Naive thymus-derived CD4-positive, alpha-beta T cell (primary cell): ENCODE measurements at regions of chr2 and their contacts with region 1.

Region 1: GRCh38 chr2:226835796-226836547 is at the start of gene RHBDD1:
- DNase-seq: peak; percentile 88 to 96 (median 94)
- ATAC-seq: peak; percentile 94
- H3K4me3 ChIP-seq: peak within 1 kb of the TSS; percentile 82
- H3K4me3 Mint-ChIP-seq: peak within 1 kb of the TSS; percentile 85 to 99 (median 97)
- H3K27ac ChIP-seq: peak within 1 kb of the TSS; percentile 99
- H3K27ac Mint-ChIP-seq: peak within 1 kb of the TSS; percentile 95 to 100 (median 100)
- H3K4me1 ChIP-seq: peaks cover 27 to 45% of the 10 kb centered on the region in 2 donors
- H3K4me1 Mint-ChIP-seq: peaks cover 20 to 67% (median 64%) of the 10 kb centered on the region in 7 donors
- H3K27me3 ChIP-seq: no peaks in the 10 kb centered on the region
- H3K27me3 Mint-ChIP-seq: no peaks in the 10 kb centered on the region
- total RNA-seq, gene RHBDD1: 42.9 to 70.8 (median 62.1) TPM

Region 2: DNA sequence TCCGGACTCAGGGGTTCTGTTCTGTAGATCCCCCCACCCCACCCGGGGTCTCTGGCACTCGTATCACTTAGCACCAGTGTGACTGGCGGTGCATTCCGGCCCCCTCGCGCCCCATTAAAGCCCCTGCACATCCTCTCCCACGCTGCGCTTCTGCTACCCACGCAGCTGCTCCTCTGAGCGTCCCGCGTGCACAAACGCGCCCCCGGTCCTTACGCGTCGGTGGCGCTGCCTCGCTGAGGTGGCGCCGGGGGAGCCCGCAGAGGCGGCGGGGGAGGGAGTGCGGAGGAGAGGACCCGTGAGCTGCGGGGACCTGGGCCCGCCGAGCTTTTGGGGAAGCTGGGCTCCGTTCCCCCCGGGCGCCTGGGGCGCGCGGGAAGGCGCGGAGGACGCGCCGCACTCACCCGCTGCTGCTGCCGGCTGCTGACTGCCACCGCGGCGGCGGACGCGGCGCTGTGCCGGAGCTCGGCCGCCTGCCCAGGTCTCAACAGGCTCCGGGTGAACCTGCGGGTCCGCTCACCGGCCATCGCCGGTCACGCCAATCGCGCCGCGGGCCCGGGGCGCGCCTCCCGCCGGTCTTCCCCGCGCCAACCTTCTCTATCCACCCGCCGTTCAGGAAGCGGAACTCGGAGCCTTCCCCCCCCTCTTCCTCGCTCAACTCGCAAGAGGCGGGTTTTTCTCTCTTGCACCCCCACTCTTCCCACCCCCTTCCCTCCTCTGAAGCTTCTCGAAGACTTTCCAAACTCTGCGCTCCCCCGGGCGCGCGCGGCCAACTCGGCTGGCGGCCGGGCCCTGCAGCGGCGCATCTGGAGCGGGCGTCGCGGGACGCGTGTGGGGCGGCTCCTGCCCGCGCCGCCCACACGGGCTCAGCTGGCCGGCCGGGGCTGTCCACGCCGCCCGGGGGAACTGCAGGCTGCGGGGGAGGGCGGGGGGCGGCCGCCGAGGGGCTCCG is 1793.8 kb before region 1 on chr2 and contains the start of gene DOCK10:
- CTCF ChIA-PET with region 1: no interaction called
- POLR2A ChIA-PET with region 1: interaction called, 3 read pairs
- intact Hi-C with region 1: loop called (anchors 2 to 5 kb)
- DNase-seq: peak; percentile 38 to 60 (median 57)
- ATAC-seq: peak; percentile 67
- H3K4me3 ChIP-seq: peak within 1 kb of the TSS; percentile 85
- H3K4me3 Mint-ChIP-seq: peak within 1 kb of the TSS; percentile 93 to 100 (median 98)
- H3K27ac ChIP-seq: peak within 1 kb of the TSS; percentile 96
- H3K27ac Mint-ChIP-seq: peak within 1 kb of the TSS; percentile 92 to 99 (median 96)
- H3K4me1 ChIP-seq: peaks cover 31 to 41% of the 10 kb centered on the region in 2 donors
- H3K4me1 Mint-ChIP-seq: peaks cover 40 to 61% (median 55%) of the 10 kb centered on the region in 7 donors
- H3K27me3 ChIP-seq: no peaks in the 10 kb centered on the region
- H3K27me3 Mint-ChIP-seq: peaks cover 0 to 29% (median 0%) of the 10 kb centered on the region in 5 donors
- total RNA-seq, gene DOCK10: 200 to 275 (median 231) TPM

Region 3: DNA sequence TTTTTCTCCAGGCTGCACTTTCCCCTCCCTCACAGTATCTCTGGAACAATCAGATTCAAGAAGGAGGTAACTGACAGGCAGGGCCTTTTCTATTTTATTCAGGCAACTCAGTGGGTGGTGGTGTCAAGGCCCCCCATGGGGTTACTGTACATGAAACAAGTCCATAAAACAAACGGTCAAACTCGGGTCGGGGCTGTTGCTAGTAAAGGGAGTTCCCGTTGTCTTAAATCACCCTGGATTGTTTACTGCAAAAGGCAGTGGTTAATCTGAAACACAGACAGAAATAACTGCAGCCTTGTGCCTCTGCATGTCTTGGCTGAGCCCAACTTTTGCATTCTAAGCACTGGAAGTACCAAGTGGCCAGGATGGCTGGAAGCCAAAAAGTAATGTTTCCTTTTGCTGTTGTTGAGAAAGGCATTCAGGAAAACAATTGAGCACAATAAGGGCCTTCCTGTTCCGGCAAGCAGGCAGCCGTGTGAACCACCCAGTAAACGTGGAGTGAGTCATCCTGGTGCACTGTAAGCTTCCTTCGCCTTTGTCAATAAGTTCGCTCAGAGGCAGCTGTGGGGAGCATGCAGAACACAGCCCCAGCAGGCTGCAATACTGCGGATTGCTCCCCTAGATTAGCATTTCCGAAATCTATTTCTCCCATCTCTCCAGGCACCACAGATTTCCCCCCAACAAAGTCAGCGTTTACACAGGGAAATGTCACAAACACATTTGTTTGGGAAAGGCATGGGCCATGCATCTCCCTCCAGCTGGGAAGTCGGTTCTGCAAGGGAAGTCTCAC is 185.9 kb before region 1 on chr2:
- CTCF ChIA-PET with region 1: no interaction called
- POLR2A ChIA-PET with region 1: no interaction called
- intact Hi-C with region 1: loop called in 1 of 2 experiments (anchors 2 kb)
- DNase-seq: peak in 5 of 9 donors; percentile 21 to 45 (median 37)
- ATAC-seq: peak; percentile 62
- H3K4me3 ChIP-seq: no peak overlapping the region
- H3K4me3 Mint-ChIP-seq: peak overlapping the region in 9 of 10 donors; percentile 8 to 61 (median 51)
- H3K27ac ChIP-seq: no peak overlapping the region
- H3K27ac Mint-ChIP-seq: peak overlapping the region in 8 of 9 donors; percentile 48 to 97 (median 78)
- H3K4me1 ChIP-seq: peaks cover 0 to 9% of the 10 kb centered on the region in 2 donors
- H3K4me1 Mint-ChIP-seq: peaks cover 5 to 55% (median 23%) of the 10 kb centered on the region in 7 donors
- H3K27me3 ChIP-seq: no peaks in the 10 kb centered on the region
- H3K27me3 Mint-ChIP-seq: peaks cover 0 to 18% (median 0%) of the 10 kb centered on the region in 5 donors

Region 4: GRCh38 chr2:226825056-226825455 is 10.9 kb before region 1 on chr2:
- CTCF ChIA-PET with region 1: no interaction called
- POLR2A ChIA-PET with region 1: interaction called, 10 read pairs
- intact Hi-C with region 1: no loop called
- DNase-seq: no peak
- ATAC-seq: no peak
- H3K4me3 ChIP-seq: no peak overlapping the region
- H3K4me3 Mint-ChIP-seq: no peak overlapping the region
- H3K27ac ChIP-seq: no peak overlapping the region
- H3K27ac Mint-ChIP-seq: no peak overlapping the region
- H3K4me1 ChIP-seq: no peaks in the 10 kb centered on the region
- H3K4me1 Mint-ChIP-seq: no peaks in the 10 kb centered on the region
- H3K27me3 ChIP-seq: no peaks in the 10 kb centered on the region
- H3K27me3 Mint-ChIP-seq: peaks cover 0 to 4% (median 0%) of the 10 kb centered on the region in 5 donors

Region 5: DNA sequence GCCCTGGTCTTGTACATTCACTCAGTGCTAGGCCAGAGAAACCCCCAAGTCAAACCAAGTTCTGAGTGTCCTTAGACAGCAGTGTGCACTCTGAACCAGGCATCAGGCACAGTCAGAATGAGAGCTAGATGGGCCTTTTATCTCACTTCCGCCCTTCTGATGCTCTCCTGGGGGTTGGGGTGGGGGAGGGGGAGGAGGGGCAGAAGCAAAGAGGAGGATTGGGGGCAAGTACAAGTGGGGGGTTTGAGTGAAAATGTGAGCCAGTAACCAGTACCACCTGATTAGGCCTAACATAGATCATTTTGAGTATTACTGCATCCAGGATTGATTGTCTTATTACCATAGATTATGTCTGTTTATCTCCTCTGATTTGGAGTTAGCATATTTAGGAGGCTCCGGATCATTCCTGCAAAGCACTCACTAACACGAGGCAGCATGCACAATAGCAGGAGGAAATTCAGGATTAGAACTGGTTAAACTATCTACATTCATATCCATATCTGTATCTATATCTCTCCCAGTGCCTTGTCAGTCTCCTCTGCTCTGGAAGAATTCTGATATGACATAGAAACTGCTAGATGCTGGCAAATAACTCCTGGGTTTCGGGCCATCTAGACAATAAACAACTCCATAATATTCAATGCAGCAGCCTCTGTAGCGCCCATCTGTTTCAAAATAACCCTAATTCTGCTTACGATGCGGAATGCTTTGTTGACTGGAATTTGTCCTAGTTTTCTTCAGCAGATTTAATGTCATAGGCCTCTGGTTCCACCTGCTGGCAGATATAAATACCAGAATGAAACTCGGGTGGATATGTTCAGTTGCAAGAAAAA is 149.0 kb after region 1 on chr2:
- CTCF ChIA-PET with region 1: no interaction called
- POLR2A ChIA-PET with region 1: no interaction called
- intact Hi-C with region 1: loop called (anchors 1 to 2 kb)
- DNase-seq: peak in 6 of 9 donors; percentile 9 to 48 (median 38)
- ATAC-seq: peak; percentile 58
- H3K4me3 ChIP-seq: no peak overlapping the region
- H3K4me3 Mint-ChIP-seq: peak overlapping the region in 3 of 10 donors; percentile 16 to 45 (median 20)
- H3K27ac ChIP-seq: no peak overlapping the region
- H3K27ac Mint-ChIP-seq: peak overlapping the region in 6 of 9 donors; percentile 22 to 76 (median 66)
- H3K4me1 ChIP-seq: peaks cover 0 to 7% of the 10 kb centered on the region in 2 donors
- H3K4me1 Mint-ChIP-seq: peaks cover 5 to 33% (median 26%) of the 10 kb centered on the region in 7 donors
- H3K27me3 ChIP-seq: no peaks in the 10 kb centered on the region
- H3K27me3 Mint-ChIP-seq: no peaks in the 10 kb centered on the region

Region 6: DNA sequence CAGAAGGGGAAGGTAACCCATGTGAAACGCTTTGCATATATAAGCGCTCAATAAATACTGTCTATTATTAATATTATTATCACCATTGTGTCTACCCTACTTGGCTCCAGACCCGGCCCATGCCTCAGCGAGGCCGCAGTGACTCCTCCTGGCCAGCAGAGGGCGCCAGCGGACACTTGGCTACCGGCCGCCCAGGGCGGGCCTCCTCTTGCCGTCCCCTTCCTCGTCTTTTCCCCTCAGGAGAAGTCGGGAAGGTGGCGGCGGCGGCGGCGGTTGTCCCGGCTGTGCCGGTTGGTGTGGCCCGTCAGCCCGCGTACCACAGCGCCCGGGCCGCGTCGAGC is 635.9 kb after region 1 on chr2 and contains the start of gene AGFG1:
- CTCF ChIA-PET with region 1: no interaction called
- POLR2A ChIA-PET with region 1: no interaction called
- intact Hi-C with region 1: loop called in 1 of 2 experiments (anchors 2 kb)
- DNase-seq: peak; percentile 71 to 90 (median 81)
- ATAC-seq: peak; percentile 97
- H3K4me3 ChIP-seq: peak within 1 kb of the TSS; percentile 55
- H3K4me3 Mint-ChIP-seq: peak within 1 kb of the TSS; percentile 86 to 96 (median 93)
- H3K27ac ChIP-seq: peak within 1 kb of the TSS; percentile 80
- H3K27ac Mint-ChIP-seq: peak within 1 kb of the TSS; percentile 77 to 94 (median 86)
- H3K4me1 ChIP-seq: peaks cover 30 to 40% of the 10 kb centered on the region in 2 donors
- H3K4me1 Mint-ChIP-seq: peaks cover 33 to 65% (median 60%) of the 10 kb centered on the region in 7 donors
- H3K27me3 ChIP-seq: no peaks in the 10 kb centered on the region
- H3K27me3 Mint-ChIP-seq: no peaks in the 10 kb centered on the region
- total RNA-seq, gene AGFG1: 52.8 to 84.5 (median 58.2) TPM